AG04449 (cell line): ENCODE measurements at regions of chr11 and their contacts with region 1.

Region 1: DNA sequence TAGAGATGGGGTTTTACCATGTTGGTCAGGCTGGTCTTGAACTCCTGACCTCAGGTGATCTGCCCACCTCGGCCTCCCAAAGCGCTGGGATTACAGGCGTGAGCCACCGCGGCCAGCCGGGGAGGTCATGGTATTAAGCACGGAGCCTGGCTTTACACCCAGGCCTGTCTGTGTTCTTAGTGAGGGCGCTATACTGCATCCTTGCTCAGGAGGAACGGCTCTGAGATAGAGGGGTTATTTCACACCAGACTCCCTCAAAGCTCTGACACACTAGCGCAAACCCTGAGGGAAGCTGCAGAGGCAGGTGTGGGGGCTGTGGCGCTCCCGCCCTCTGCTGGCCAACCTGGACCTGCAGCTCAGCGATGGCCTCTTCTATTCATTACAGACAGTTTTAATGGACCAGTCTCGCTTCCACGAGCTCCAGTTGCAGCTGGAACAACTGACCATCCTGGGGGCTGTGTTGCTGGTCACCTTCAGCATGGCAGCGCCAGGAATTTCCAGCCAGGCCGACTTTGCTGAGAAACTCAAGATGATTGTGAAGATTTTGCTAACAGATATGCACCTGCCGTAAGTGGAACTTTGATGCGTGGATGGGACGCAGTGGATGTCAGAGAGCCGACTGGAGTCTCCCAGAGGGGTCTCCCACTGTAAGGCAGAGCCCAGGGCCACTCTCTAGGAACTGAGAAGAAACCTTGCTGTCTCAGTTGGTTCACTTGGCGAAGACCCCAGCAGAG is 26.2 kb downstream of the TCP11L1 start:
- DNase-seq: no peak
- H3K4me3 ChIP-seq: no peak overlapping the region
- CTCF ChIP-seq: peak; percentile 97

Region 2: DNA sequence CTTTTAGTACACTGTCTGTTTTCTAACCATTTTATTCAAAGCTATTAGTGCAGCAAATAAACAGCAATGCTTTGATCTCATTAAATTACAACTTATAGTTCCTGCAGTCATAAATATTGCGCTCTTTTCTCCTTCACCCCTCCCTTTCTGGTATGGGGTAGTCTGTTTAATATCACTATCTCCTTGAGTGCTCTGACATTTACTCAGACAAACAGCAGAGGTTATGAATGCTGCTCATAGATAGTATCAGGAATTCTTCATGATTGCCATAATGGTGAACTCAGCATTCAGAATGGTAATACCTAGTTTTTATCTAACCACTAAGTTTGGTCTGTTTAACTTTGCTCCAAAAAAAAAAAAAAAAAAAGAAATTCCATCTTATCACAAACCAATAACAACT is 394.6 kb before region 1 on chr11:
- CTCF ChIA-PET with region 1: no interaction called
- POLR2A ChIA-PET with region 1: no interaction called
- DNase-seq: no peak
- H3K4me3 ChIP-seq: no peak overlapping the region
- CTCF ChIP-seq: no peak

Region 3: DNA sequence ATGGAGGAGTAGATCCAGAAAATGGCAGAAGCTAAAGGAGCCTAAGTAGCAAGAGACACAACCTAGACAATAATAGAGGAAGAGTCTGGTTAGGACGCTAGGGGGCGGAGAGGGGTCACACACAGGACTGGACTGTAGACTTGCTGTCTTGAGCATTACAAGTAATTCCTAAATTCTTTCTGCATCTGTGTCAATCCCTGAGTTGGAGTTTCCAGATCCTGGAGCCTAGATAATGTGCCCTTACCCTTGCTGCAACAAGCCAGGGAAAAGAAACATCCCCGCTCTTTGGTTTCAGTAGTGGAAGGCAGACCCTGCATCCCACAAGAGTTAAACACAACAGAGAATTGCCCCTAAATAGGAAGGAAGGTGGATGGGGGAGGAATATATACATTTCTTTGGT is 256.3 kb before region 1 on chr11:
- CTCF ChIA-PET with region 1: interaction called, 18 read pairs
- POLR2A ChIA-PET with region 1: no interaction called
- DNase-seq: peak; percentile 24
- H3K4me3 ChIP-seq: no peak overlapping the region
- CTCF ChIP-seq: peak; percentile 81

Region 4: DNA sequence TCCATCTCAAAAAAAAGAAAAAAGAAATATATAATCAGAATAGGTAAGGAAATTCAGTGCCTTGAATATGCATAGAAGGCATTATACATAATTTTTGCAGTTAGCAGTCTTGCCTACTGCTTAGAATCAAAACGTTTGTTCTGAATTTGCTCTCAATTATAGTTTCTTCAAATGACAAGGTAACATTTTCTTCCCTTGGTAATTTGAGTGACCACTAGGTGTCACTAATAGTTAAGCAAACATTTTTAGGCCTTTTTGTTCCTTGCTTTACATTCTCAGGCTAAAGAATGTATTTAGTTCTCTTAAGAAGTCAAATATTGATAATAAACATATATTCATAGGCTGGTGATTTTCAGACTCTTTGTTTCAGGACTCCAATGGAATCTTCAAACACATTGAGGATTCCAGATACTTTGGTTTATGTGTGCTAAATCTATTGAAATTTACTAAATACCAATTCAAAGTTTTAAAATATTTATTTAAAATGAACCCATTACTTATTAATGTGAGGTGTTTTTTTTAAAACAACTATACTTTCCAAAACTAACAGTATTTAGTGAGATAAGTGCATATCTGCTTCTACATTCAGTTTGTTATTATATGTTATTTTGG is 105.0 kb before region 1 on chr11:
- CTCF ChIA-PET with region 1: interaction called, 415 read pairs
- POLR2A ChIA-PET with region 1: no interaction called
- DNase-seq: peak; percentile 21
- H3K4me3 ChIP-seq: no peak overlapping the region
- CTCF ChIP-seq: peak; percentile 29

Region 5: GRCh38 chr11:33045551-33046255 is 19.9 kb before region 1 on chr11:
- CTCF ChIA-PET with region 1: interaction called, 21 read pairs
- POLR2A ChIA-PET with region 1: interaction called, 4 read pairs
- DNase-seq: no peak
- H3K4me3 ChIP-seq: no peak overlapping the region
- CTCF ChIP-seq: no peak

Region 6: GRCh38 chr11:33052231-33052630 is 13.4 kb before region 1 on chr11:
- CTCF ChIA-PET with region 1: interaction called, 54 read pairs
- POLR2A ChIA-PET with region 1: no interaction called
- DNase-seq: no peak
- H3K4me3 ChIP-seq: no peak overlapping the region
- CTCF ChIP-seq: no peak

Region 7: GRCh38 chr11:33086017-33086416 is 20.4 kb after region 1 on chr11:
- CTCF ChIA-PET with region 1: interaction called, 35 read pairs
- POLR2A ChIA-PET with region 1: no interaction called
- DNase-seq: no peak
- H3K4me3 ChIP-seq: no peak overlapping the region
- CTCF ChIP-seq: no peak

Region 8: GRCh38 chr11:33435216-33435615 is 369.6 kb after region 1 on chr11:
- CTCF ChIA-PET with region 1: no interaction called
- POLR2A ChIA-PET with region 1: no interaction called
- DNase-seq: no peak
- H3K4me3 ChIP-seq: no peak overlapping the region
- CTCF ChIP-seq: no peak